Activated CD4-positive, alpha-beta T cell treated with anti-CD3 and anti-CD28 coated beads for 36 hours (primary cell): ENCODE measurements at regions of chr18 and their contacts with region 1.

Region 1: DNA sequence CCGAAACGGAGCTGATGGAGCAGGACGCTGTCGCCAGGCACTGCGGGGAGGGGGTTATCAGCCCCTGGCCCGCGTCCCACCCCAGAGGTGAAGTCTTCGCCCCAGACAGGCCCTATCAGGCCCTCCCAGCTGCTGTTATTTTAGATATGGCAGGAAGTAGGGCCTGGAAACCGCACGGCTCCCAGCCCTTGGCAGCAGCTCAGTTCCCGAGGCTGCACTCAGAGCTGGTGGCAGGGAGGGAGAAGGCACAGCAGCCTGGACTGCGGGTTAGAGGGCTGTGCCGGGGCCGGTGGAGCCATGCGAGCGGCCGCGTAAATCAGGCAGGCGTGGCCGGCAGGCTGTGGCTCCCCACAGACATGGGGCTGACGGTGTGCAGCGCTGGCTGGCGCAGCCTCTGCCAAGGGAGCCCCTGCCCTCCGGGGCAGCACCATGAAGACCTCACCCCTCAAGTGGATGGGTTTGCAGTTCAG is 111.4 kb downstream of the NFATC1 start:
- DNase-seq: peak; percentile 51
- ATAC-seq: peak; percentile 38
- H3K4me3 Mint-ChIP-seq: peak overlapping the region; percentile 60
- H3K27ac Mint-ChIP-seq: peak overlapping the region; percentile 88
- H3K4me1 Mint-ChIP-seq: peaks cover 61% of the 10 kb centered on the region
- H3K27me3 Mint-ChIP-seq: no peaks in the 10 kb centered on the region

Region 2: GRCh38 chr18:79030680-79031079 is 476.4 kb before region 1 on chr18:
- CTCF ChIA-PET with region 1: no interaction called
- POLR2A ChIA-PET with region 1: no interaction called
- intact Hi-C with region 1: no loop called
- DNase-seq: no peak
- ATAC-seq: no peak
- H3K4me3 Mint-ChIP-seq: no peak overlapping the region
- H3K27ac Mint-ChIP-seq: no peak overlapping the region
- H3K4me1 Mint-ChIP-seq: no peaks in the 10 kb centered on the region
- H3K27me3 Mint-ChIP-seq: peaks cover 2% of the 10 kb centered on the region

Region 3: GRCh38 chr18:79465392-79465991 is 41.6 kb before region 1 on chr18:
- CTCF ChIA-PET with region 1: no interaction called
- POLR2A ChIA-PET with region 1: no interaction called
- intact Hi-C with region 1: no loop called
- DNase-seq: no peak
- ATAC-seq: no peak
- H3K4me3 Mint-ChIP-seq: no peak overlapping the region
- H3K27ac Mint-ChIP-seq: peak overlapping the region; percentile 59
- H3K4me1 Mint-ChIP-seq: peaks cover 2% of the 10 kb centered on the region
- H3K27me3 Mint-ChIP-seq: no peaks in the 10 kb centered on the region

Region 4: DNA sequence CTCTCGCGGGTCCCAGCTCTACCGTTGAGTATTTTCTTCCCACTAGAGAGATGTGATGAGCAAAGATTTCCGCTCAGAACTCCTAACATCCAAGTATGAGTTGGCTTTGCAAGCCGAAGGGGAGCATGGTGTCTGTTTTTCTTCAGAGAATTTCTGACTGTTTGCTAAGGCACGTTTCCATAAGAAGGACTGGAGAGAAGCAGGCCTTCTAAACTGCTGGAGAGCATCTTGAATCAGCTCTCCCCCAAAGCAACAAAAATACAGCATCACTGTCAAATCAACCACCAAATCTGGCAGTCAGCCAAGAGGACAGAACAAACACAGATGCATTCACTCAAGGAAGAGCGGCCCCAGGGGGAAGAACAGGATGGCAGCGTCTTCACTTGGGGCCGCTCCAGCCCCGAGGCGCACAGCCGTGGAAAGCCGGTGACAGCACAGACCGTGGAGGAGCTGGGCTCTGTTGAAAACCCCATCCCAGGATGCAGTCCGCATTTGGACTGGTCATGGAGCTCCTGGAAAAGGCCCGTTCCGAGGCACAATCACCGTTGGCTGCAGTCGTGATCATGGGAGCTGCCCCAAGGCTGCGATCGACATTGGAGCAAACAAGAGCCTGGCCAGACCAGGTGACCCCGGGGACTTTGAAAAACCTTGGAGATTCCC is 10.0 kb before region 1 on chr18:
- CTCF ChIA-PET with region 1: interaction called, 3 read pairs
- POLR2A ChIA-PET with region 1: no interaction called
- intact Hi-C with region 1: loop called in 1 of 2 experiments (anchors 1 kb)
- DNase-seq: no peak
- ATAC-seq: no peak
- H3K4me3 Mint-ChIP-seq: no peak overlapping the region
- H3K27ac Mint-ChIP-seq: no peak overlapping the region
- H3K4me1 Mint-ChIP-seq: peaks cover 26% of the 10 kb centered on the region
- H3K27me3 Mint-ChIP-seq: no peaks in the 10 kb centered on the region

Region 5: DNA sequence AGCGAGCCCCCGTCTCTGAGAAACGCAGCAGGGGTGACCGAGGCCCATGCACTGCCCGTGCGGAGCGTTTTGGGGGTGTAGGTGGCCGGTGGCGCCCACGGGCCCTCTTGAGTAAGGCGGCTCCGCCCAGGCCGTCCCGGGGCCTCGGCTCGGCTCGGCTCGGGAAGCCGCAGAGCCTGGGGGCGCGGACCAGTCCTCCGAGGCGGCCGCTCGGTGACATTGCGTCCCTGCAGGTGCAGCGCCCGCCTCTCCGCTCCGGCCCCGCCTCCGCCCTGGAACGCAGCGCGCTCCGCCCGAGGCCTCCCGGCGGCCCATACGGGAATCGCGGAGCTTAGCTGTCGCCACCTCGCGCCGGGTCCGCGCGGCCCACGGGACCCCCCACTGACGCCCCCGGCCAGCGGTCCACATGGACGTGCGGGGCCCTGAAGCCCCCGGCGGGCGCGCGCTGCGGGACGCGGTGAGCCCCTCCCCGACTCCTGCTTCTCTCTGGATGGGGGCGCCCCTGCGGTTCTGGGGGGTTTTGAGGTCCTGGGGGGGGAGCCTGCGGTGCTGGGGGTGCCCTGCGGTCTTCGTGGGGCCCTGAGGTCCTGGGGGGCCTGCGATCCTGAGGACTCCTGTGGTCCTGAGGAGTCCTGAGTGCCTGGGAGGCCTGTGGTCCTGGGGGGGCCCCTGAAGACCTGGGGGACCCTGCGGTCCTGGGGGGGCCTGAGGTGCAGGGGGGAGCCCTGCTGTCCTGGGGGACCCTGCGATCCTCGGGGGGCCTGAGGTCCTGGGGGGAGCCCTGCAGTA is 457.4 kb after region 1 on chr18 and contains the start of gene HSBP1L1:
- CTCF ChIA-PET with region 1: no interaction called
- POLR2A ChIA-PET with region 1: no interaction called
- intact Hi-C with region 1: no loop called
- DNase-seq: peak; percentile 83
- ATAC-seq: peak; percentile 79
- H3K4me3 Mint-ChIP-seq: peak within 1 kb of the TSS; percentile 71
- H3K27ac Mint-ChIP-seq: peak within 1 kb of the TSS; percentile 80
- H3K4me1 Mint-ChIP-seq: peaks cover 41% of the 10 kb centered on the region
- H3K27me3 Mint-ChIP-seq: peaks cover 2% of the 10 kb centered on the region
- total RNA-seq, gene HSBP1L1: 14.4 to 16.9 TPM